ENCODE measurements at regions of chr1 and their contacts with region 1.

Region 1: DNA sequence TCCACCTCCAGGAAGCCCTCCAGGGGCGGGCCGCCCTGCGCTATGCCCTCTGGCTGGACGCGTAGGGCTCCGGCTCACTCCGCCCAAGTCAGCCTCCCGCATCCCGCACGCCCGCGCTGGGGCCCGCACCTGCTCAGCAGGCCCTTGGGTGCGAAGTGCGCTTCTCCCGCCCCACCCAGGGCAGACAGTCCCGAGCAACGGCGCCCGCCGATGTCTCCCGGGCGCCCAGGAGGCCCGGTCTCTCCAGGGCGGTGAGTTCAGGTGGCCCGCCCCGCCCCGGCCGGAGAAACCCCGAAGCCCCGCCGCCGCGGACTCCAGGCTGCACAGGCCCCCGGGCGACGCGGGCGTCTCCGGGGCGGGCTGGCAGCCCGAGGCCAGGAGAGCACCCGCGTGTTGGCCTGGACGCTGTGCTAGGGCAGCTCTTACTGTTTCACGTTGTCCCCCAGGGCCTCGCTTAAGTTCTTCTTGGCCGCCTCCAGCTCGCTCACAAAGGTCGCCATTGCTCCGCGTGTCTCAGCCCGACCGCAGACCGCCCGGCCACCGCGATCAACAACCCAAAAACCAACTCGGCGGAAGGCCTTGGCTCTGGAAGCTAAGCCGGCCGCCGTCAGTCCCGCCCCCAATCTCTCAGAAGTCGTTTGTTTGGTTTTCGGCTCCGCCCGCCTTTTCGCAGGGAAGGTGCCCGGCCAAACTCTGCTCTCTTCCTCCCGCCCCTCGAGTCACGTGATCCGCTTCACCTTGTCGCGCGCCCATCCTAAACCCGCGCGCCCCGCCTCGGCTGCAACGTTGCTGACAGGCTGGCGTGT is at the start of gene TADA1:
- DNase-seq: peak; percentile 96 to 100 (median 99)

Region 2: DNA sequence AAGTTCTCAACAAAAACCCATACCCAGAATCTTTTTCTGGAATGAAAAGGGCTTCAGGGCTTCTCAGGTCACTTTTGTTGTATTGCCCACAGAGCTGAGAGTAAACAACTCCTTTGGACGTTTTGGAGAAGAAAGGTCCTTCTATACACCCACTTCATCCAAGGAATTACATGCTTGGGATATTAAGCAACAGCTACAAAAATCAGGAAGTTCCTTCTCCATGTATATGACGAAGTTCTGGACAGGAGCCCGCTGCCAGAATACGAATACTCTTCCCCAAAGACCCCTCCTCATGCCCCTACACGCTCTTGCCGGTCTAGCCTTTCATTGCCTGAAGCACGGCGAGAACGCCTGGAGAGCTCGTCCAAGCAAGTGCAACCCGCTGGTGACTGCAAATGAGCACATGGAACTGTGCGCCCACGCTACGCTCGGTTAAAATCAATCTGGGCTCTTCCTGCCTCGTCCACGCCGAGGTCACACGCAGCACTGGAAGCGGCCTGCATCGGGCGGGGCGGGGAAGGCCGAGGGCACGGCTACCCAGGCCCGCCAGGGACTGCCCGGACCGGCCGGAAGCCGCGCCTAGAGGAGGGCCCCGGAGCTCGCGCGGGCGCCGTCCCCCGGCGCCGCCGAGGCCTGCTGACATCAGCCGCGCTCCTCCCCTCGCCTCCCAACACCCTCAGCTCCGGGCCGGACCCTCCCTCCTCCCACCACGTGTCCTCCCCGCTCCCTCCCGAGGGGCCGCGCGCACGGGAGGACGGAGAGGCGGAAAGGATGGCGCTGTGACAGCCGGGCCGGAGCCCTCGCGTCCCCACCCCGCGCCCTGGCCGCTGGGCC is 37.0 kb before region 1 on chr1 and contains the start of gene POGK:
- intact Hi-C with region 1: loop called (anchors 1 kb)
- DNase-seq: peak; percentile 89 to 99 (median 92)

Region 3: GRCh38 chr1:166843769-166844596 is 32.0 kb before region 1 on chr1:
- intact Hi-C with region 1: loop called (anchors 1 kb)
- DNase-seq: peak in 7 of 10 donors; percentile 22 to 86 (median 53)

Region 4: DNA sequence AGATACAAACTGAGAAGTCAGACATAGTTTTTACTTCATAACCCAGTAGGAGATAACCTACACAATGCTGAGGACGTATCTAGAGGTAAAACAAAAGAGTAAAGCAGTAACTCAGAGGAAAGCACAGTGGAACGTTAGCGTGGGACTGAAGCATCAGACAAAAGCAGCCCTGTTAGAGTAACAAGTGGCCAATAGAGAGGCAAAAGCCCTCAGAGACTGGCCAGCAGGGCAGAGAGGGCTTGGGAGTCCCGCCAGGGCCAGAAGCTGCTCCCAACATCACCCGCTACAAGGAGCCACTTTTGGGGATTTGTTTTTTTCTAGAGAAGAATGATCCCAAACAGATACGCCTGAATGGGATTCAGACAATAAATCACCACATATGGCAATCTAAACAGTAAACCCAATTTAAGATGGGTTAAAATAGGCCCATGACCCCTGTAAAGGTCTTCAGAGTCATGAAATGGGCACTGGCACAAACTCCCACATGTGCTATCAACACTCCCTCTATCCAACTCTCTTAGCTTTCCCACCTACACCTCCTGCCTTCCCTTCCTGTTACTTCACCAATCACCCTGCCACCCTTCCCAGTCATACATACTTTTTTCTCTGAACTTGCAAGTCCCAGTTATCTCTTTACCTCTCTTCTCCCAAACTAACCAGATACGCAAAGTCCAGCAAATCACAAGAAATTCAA is 17.1 kb before region 1 on chr1:
- intact Hi-C with region 1: no loop called
- DNase-seq: peak in 9 of 10 donors; percentile 48 to 94 (median 66)

Region 5: GRCh38 chr1:166947398-166948043 is 71.6 kb after region 1 on chr1:
- intact Hi-C with region 1: no loop called
- DNase-seq: peak; percentile 83 to 98 (median 86)